HCT116 (cell line): ENCODE measurements at regions of chr1 and their contacts with region 1.

Region 1: DNA sequence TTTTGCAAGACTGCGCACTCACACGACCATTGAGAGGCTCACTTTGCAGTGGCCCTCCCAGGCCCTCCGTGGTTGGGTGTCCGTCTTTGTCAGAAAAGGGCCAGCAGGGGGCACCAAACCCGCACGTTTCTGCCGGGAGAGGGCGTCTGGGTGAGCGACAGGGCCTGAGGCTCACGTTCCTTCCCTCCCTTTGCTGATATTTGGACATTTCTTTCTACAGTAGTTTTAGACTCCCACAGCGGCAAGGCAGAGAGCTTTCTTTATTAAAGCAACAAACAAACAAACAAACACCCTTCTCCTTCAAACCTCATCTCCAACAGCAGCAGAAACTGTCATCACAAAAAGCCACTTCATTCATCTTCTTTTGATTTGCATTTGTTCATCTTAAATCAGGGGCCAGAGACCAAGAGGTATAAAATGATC is 79.2 kb upstream of the WDR26 start:
- DNase-seq: peak; percentile 68
- ATAC-seq: peak; percentile 100
- H3K4me3 ChIP-seq: no peak overlapping the region
- H3K27ac ChIP-seq: no peak overlapping the region
- H3K4me1 ChIP-seq: peaks cover 0 to 5% of the 10 kb centered on the region in 2 experiments; a peak in 1 of 4 replicates
- H3K27me3 ChIP-seq: no peaks in the 10 kb centered on the region
- CTCF ChIP-seq: peak; percentile 84 to 98 (median 94)
- POLR2A ChIP-seq: no peak
- RAD21 ChIP-seq: peak; percentile 99

Region 2: GRCh38 chr1:224317383-224318024 is 196.3 kb before region 1 on chr1:
- CTCF ChIA-PET with region 1: no interaction called
- POLR2A ChIA-PET with region 1: no interaction called
- RAD21 ChIA-PET with region 1: no interaction called
- intact Hi-C with region 1: no loop called
- DNase-seq: no peak
- ATAC-seq: no peak
- H3K4me3 ChIP-seq: no peak overlapping the region
- H3K27ac ChIP-seq: no peak overlapping the region
- H3K4me1 ChIP-seq: no peaks in the 10 kb centered on the region
- H3K27me3 ChIP-seq: no peaks in the 10 kb centered on the region
- CTCF ChIP-seq: no peak
- POLR2A ChIP-seq: no peak
- RAD21 ChIP-seq: no peak

Region 3: GRCh38 chr1:224644553-224645154 is 130.9 kb after region 1 on chr1:
- CTCF ChIA-PET with region 1: interaction called, 23 read pairs
- POLR2A ChIA-PET with region 1: no interaction called
- RAD21 ChIA-PET with region 1: interaction called, 6 to 9 read pairs
- intact Hi-C with region 1: loop called (anchors 1 kb)
- DNase-seq: peak; percentile 47
- ATAC-seq: peak; percentile 85
- H3K4me3 ChIP-seq: no peak overlapping the region
- H3K27ac ChIP-seq: no peak overlapping the region
- H3K4me1 ChIP-seq: no peaks in the 10 kb centered on the region
- H3K27me3 ChIP-seq: no peaks in the 10 kb centered on the region
- CTCF ChIP-seq: peak; percentile 83 to 87 (median 85)
- POLR2A ChIP-seq: no peak
- RAD21 ChIP-seq: peak; percentile 76

Region 4: DNA sequence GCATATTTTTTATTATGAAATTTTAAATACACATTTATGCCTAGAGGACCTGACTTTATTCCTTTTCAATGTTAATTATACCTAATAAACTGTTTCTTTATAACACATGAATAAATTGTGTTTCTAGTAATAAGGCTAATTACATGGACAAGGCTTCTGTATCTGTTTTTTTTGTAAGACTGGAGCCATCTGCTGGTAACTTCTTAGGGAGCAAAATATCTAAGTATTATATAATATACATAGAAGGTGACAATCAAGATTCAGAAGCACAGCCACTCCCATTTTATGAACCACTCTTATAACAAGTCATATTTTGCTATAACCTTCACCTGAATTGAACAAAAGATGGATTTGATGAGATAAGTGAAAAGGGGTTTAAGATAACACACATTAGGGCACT is 829.8 kb after region 1 on chr1:
- CTCF ChIA-PET with region 1: no interaction called
- POLR2A ChIA-PET with region 1: no interaction called
- RAD21 ChIA-PET with region 1: no interaction called
- intact Hi-C with region 1: loop called (anchors 10 kb)
- DNase-seq: peak; percentile 16
- ATAC-seq: peak; percentile 53; the same call in 1 of the 2 replicates
- H3K4me3 ChIP-seq: no peak overlapping the region
- H3K27ac ChIP-seq: no peak overlapping the region
- H3K4me1 ChIP-seq: no peaks in the 10 kb centered on the region
- H3K27me3 ChIP-seq: no peaks in the 10 kb centered on the region
- CTCF ChIP-seq: peak; percentile 37 to 54 (median 39)
- POLR2A ChIP-seq: no peak
- RAD21 ChIP-seq: peak; percentile 52